ENCODE measurements at regions of chr4 and their contacts with region 1.

Region 1: GRCh38 chr4:38319456-38320342 is 344.3 kb upstream of the KLF3 start:
- DNase-seq: peak; percentile 83 to 92 (median 90)
- H3K4me3 ChIP-seq: peak overlapping the region in 6 of 7 experiments; percentile 40 to 82 (median 69)
- H3K27ac ChIP-seq: peak overlapping the region in 1 of 2 experiments; percentile 72
- H3K4me1 ChIP-seq: peaks cover 10 to 27% (median 19%) of the 10 kb centered on the region in 4 experiments
- H3K27me3 ChIP-seq: no peaks in the 10 kb centered on the region

Region 2: DNA sequence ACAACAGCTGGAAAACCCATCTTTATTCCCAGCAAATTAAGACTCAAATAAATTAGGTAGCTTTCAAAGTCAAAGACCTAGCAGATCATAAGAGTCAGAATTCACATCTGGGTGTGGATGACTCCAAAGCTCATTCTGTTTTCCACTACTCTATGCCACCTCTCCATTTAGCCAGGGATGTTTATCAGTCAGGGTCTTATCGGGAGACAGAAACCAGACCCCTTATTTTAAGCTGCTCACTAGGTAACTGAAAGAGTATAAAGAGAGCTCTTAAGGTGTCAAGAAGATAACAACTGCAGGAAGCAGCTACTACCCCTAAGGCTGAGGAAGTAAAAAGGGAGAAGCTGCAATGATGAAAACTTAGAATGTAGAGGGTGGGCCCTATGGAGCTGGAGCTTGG is 10.6 kb after region 1 on chr4:
- CTCF ChIA-PET with region 1: interaction called, 15 read pairs
- POLR2A ChIA-PET with region 1: no interaction called
- DNase-seq: peak in 1 of 3 donors; percentile 37
- H3K4me3 ChIP-seq: no peak overlapping the region
- H3K27ac ChIP-seq: no peak overlapping the region
- H3K4me1 ChIP-seq: peaks cover 1 to 56% (median 41%) of the 10 kb centered on the region in 4 experiments
- H3K27me3 ChIP-seq: no peaks in the 10 kb centered on the region

Region 3: DNA sequence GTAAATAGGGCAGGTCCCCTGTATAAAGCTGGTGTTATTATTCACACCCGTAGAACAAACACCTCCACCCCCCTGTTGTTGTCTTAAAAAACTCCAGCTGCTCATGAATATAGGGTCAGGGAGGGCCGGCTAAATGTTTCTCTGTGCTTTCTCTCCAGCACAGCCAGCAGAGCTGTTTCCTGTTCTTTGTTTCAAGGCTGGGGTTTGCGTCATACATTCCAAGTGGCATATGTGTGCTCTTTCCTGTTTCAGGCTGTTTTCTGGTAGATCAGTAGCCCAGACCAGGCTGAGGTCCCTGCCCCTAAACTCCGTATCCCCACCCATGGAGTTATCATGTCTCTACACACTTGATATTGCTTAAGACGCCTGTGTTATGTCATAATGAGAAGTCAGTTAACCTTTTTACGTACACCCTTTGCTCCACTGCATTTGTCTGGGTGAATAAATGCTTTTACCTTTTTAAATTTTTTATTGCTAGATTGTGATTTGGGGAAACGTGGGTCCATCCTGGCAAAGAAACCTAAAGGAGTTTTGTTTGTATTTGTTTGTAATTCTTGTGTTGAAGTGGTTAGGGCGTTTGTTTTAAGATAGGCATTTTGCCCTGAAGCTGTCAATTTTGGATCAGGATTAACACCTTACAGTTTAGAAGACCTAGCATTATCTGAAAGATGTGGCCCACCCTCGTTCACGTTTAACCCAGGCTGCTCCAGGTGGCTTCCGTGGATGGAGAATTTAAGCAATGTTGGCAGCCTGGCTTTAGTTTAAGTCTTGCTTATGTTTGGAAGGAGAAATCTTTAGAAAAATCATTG is 347.6 kb after region 1 on chr4:
- CTCF ChIA-PET with region 1: interaction called, 30 read pairs
- POLR2A ChIA-PET with region 1: no interaction called
- DNase-seq: peak; percentile 94 to 98 (median 97)
- H3K4me3 ChIP-seq: peak overlapping the region in 6 of 7 experiments; percentile 37 to 89 (median 85)
- H3K27ac ChIP-seq: peak overlapping the region; percentile 81 to 93
- H3K4me1 ChIP-seq: peaks cover 53 to 76% (median 68%) of the 10 kb centered on the region in 4 experiments
- H3K27me3 ChIP-seq: no peaks in the 10 kb centered on the region

Measured in common myeloid progenitor, CD34-positive (primary cell).